HCT116 (cell line): ENCODE measurements at regions of chr3 and their contacts with region 1.

Region 1: DNA sequence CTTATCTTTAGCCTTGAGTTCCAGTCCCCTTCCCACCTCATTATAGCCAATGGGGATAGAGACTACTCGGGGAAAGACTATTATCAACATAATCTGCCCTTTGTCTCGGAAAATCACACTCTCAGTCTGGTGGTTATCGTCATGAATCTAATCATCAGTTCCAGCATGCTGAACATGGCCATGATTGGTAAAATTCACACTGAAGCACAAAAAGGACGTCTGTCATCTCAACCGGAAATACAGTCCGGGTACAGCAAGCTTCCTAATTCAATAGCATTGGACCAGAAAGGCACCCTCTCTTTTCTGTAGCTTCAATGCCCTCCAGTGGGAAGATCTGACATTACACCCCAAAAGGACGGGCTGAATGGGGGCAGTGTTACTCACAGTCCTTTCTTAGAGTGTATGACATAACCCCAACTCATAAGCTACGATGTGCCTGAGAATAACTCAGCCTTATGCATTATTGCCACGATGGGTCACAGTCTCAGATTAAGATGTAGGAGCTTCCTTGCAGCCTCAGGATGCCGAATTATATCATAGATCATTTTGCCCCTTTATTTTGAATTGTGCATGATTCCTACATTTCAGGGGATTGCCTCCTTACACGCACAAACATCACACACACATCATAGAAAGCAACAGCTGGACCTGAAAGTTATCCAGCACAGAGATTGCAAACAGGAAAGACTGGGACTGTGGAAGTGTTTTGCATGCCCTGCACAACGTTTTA is 390.4 kb upstream of the LMCD1 start:
- DNase-seq: peak; percentile 63
- ATAC-seq: peak; percentile 98
- H3K4me3 ChIP-seq: no peak overlapping the region
- H3K27ac ChIP-seq: no peak overlapping the region
- H3K4me1 ChIP-seq: 0 out of 4 replicates have a peak, but pooled peaks cover 0 to 3% of the 10 kb centered on the region in 2 experiments
- H3K27me3 ChIP-seq: no peaks in the 10 kb centered on the region
- CTCF ChIP-seq: peak; percentile 79 to 92 (median 84)
- POLR2A ChIP-seq: no peak
- RAD21 ChIP-seq: peak; percentile 97

Region 2: DNA sequence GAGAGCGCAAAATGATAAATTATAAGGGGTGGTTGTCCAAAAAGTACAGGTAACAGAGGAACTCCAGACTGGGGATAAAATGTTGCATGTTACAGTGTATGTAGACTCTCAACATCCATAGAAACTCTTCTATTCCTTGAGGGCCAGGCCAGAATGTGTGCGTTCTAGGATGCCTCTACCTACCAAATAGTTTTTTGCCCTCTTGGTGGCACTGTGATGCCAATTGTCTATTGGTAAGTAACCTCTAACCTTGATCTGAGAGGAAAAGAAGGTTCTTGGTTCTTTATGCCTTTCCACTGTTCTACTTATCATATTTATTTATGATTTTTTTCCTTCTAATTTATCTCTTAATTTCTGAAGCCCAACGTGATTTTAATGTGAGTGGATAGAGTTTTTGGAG is 825.7 kb before region 1 on chr3:
- CTCF ChIA-PET with region 1: interaction called, 4 read pairs
- POLR2A ChIA-PET with region 1: no interaction called
- RAD21 ChIA-PET with region 1: no interaction called
- intact Hi-C with region 1: loop called (anchors 5 kb)
- DNase-seq: peak; percentile 10
- ATAC-seq: peak; percentile 79
- H3K4me3 ChIP-seq: no peak overlapping the region
- H3K27ac ChIP-seq: no peak overlapping the region
- H3K4me1 ChIP-seq: no peaks in the 10 kb centered on the region
- H3K27me3 ChIP-seq: no peaks in the 10 kb centered on the region
- CTCF ChIP-seq: peak; percentile 11 to 39 (median 23); a peak in 3 of 6 replicates
- POLR2A ChIP-seq: no peak
- RAD21 ChIP-seq: peak; percentile 62

Region 3: DNA sequence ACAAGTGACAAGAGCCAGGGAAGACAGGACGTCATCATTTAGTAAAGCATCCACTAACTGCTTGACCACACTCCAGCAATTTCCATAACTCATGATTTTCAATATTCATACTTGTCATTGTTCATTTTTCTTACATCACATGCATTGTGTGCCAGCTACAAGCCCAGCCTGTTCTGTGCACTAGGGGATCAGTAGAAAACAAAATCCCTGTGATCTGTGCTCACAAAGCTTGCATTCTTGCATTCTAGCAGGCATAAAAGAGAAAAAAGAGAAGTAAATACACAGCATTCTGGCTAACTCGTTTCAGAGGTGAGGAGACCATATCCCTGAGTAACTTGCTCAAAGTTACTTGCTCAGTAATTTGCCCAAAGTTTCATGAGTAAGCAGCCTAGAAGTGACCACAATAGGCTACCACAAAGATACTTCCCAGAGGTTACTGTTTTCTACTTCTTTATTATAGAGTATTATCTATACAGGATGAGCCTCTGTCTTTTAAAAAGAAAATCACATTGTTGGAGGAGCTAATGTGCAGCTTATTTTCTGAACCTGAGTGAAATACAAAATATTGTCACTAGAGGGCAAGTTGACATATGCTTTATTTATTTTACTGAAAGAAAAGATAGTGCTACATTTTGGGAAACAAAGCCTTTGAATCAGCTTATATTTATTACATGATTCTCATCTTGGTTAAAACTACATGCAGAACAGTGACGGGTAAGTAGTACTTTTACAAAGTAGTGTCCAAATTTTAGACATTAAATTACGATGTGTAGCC is 311.0 kb before region 1 on chr3:
- CTCF ChIA-PET with region 1: interaction called, 21 read pairs
- POLR2A ChIA-PET with region 1: no interaction called
- RAD21 ChIA-PET with region 1: interaction called in 1 of 2 experiments, 3 read pairs
- intact Hi-C with region 1: loop called (anchors 1 kb)
- DNase-seq: no peak
- ATAC-seq: peak; percentile 62
- H3K4me3 ChIP-seq: no peak overlapping the region
- H3K27ac ChIP-seq: no peak overlapping the region
- H3K4me1 ChIP-seq: no peaks in the 10 kb centered on the region
- H3K27me3 ChIP-seq: no peaks in the 10 kb centered on the region
- CTCF ChIP-seq: peak; percentile 27 to 52 (median 48); a peak in 4 of 6 replicates
- POLR2A ChIP-seq: no peak
- RAD21 ChIP-seq: peak; percentile 71

Region 4: DNA sequence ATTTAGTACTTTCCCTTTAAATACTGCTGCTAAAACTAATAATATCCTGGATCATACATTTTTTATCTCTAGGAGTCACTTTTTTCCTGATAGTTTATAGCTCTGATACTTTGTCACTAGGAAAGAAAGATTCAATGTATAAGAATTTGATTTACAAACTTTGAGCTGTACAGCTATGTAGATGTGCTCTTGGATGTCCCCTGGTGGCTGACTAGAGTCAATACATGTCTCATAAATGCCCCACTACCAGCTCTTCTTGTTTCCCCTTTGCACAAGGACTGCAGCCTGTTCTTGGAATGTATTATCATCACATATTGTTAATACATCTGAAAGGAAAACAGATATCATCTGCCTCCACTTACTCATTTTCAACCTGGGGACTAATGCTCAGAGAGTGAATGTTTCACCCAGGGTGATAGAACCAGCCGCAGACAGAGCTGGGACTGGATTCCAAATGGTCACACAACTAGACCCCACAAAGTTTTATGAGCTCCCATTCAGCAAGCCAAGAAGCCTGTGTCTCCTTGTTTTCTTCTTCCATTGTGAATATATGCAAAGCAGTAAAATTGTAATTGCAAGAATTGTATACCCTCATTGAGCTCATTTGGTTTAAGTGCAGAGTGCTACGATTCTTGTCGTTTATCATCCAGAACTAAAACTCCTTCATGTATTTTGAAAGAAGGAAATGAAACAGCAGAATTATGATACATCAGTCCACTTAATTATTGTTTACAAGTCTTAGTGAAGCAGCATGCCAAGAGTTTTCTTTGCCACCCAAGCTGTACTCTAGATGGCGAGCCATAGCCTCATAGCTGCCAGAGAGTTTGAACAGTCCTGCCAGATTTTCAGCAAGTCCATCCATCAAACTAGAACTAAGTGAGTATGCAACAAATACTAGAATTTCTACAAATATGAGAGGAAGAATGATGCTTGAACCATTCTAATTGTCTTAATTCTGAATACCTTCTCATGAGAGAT is 128.8 kb after region 1 on chr3:
- CTCF ChIA-PET with region 1: interaction called, 12 read pairs
- POLR2A ChIA-PET with region 1: no interaction called
- RAD21 ChIA-PET with region 1: interaction called in 1 of 2 experiments, 4 read pairs
- intact Hi-C with region 1: no loop called
- DNase-seq: peak; percentile 48
- ATAC-seq: peak; percentile 93
- H3K4me3 ChIP-seq: no peak overlapping the region
- H3K27ac ChIP-seq: no peak overlapping the region
- H3K4me1 ChIP-seq: no peaks in the 10 kb centered on the region
- H3K27me3 ChIP-seq: no peaks in the 10 kb centered on the region
- CTCF ChIP-seq: peak; percentile 53 to 93 (median 88)
- POLR2A ChIP-seq: no peak
- RAD21 ChIP-seq: peak; percentile 56

Region 5: GRCh38 chr3:8416965-8417364 is 305.7 kb after region 1 on chr3:
- CTCF ChIA-PET with region 1: interaction called, 7 read pairs
- POLR2A ChIA-PET with region 1: no interaction called
- RAD21 ChIA-PET with region 1: interaction called in 1 of 2 experiments, 3 read pairs
- intact Hi-C with region 1: loop called (anchors 10 kb)
- DNase-seq: peak; percentile 6
- ATAC-seq: peak; percentile 90
- H3K4me3 ChIP-seq: no peak overlapping the region
- H3K27ac ChIP-seq: no peak overlapping the region
- H3K4me1 ChIP-seq: peaks cover 3 to 4% of the 10 kb centered on the region in 2 experiments; a peak in 2 of 4 replicates
- H3K27me3 ChIP-seq: no peaks in the 10 kb centered on the region; the same call in 1 of the 2 replicates
- CTCF ChIP-seq: no peak
- POLR2A ChIP-seq: no peak
- RAD21 ChIP-seq: no peak